ENCODE measurements at regions of chr6 and their contacts with region 1.

Region 1: DNA sequence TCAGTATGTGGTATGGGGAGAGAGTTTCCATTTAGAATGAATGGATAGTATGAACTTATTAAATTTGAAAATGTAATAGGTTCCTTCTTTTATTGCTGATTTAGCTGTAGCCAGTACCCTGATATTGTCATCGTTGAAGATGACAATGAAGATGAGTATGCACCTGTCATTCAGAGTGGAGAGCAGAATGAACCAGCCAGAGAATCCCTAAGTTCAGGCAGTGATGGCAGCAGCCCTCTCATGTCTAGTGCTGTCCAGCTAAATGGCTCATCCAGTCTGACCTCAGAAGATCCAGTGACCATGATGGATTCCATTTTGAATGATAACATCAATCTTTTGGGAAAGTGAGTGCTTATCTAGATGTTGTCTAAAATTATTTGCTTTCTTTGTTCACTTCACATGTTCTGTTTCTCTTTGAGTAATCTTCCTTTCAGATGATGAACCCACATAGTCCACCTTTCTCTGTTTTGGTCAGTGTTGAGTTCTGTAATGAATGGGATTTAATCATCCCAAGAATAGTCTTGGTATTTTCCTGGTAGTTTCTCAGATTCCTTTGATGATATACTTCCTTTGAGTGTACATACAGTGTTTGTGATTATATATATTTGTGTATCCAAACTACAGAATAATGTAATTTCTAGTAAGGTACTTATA is 23.3 kb downstream of the HSF2 start:
- DNase-seq: no peak
- ATAC-seq: peak; percentile 79
- H3K4me3 Mint-ChIP-seq: no peak overlapping the region
- H3K27ac Mint-ChIP-seq: no peak overlapping the region
- H3K4me1 Mint-ChIP-seq: peaks cover 15% of the 10 kb centered on the region
- H3K27me3 Mint-ChIP-seq: no peaks in the 10 kb centered on the region

Region 2: GRCh38 chr6:122393351-122393896 is 29.3 kb before region 1 on chr6:
- CTCF ChIA-PET with region 1: no interaction called
- POLR2A ChIA-PET with region 1: no interaction called
- intact Hi-C with region 1: loop called (anchors 1 to 2 kb)
- DNase-seq: peak; percentile 49
- ATAC-seq: peak; percentile 99
- H3K4me3 Mint-ChIP-seq: no peak overlapping the region
- H3K27ac Mint-ChIP-seq: peak overlapping the region; percentile 63
- H3K4me1 Mint-ChIP-seq: peaks cover 16% of the 10 kb centered on the region
- H3K27me3 Mint-ChIP-seq: peaks cover 2% of the 10 kb centered on the region